ENCODE measurements at regions of chr2 and their contacts with region 1.

Region 1: DNA sequence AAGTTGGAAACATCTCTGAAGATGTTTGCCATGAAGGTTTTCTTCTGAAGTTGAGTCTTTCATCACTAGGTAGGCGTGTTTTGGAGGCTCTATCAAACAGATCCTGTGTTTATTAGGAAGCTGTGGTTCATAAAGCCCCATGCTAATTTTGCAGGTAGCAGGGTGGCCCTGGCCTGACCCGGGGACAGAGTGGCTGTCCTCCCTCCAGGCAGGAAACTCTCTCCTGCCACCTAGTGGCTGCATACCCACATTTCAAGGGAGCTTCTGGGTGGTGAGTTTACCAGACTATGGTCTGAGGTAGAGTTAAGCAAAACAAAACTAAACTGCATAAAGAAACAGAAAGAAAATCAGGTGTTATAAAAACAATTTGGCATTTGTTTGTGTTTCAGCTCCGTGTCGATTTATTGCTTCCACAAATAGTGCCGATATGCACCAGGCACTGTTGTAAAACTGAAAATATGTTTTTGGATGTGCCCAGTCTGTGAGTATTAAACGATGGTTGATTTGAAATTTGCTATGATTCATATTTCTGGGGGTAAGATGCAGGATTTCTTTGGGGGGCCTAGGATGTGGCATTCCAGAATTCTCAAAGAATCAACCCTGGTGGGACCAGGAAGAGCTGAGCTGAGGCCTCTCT is 26.0 kb upstream of the IL37 start:
- DNase-seq: peak; percentile 86
- H3K4me3 Mint-ChIP-seq: no peak overlapping the region
- H3K27ac Mint-ChIP-seq: peak overlapping the region; percentile 44
- H3K4me1 Mint-ChIP-seq: peaks cover 56% of the 10 kb centered on the region
- H3K27me3 Mint-ChIP-seq: no peaks in the 10 kb centered on the region
- CTCF ChIP-seq: peak; percentile 91

Region 2: DNA sequence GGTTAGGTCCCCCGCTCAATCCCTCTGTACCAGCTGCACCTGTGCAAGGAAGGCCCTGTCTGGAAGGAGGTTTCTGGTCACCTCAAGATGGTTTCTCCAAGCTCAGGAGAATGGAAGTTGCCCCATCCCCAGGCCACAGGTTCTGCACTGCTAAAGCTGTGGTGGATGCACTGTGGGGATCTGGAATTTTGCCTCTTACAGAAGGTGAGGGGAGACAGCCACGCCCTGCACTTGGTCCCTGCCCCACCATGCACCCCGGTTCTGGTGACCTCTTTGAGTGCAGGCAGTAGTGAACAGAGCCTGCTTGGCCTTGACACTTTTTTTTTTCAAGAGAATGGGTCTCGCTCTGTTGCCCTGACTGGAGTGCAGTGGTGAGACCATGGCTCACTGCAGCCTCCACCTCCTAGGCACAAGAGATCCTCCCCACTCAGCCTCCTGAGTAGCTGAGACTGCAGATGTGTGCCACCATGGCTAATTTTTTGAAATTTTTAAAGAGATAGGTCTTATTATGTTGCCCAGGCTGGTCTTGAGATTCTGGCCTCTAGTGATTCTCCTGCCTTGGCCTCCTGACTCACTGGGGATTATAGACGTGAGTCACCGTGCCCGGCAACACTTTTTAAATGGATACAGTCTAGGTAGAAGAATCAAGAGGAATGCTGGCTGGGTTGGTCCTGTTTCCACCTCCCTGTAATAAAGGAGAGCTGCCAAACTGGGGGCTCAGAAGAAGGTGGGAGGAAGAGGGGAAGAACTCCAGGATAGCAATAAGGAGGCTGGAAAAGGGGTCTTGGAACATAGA is 170.0 kb before region 1 on chr2:
- CTCF ChIA-PET with region 1: no interaction called
- intact Hi-C with region 1: no loop called
- DNase-seq: peak; percentile 44
- H3K4me3 Mint-ChIP-seq: no peak overlapping the region
- H3K27ac Mint-ChIP-seq: no peak overlapping the region
- H3K4me1 Mint-ChIP-seq: peaks cover 25% of the 10 kb centered on the region
- H3K27me3 Mint-ChIP-seq: peaks cover 8% of the 10 kb centered on the region
- CTCF ChIP-seq: no peak

Region 3: GRCh38 chr2:112749755-112750559 is 135.0 kb before region 1 on chr2:
- CTCF ChIA-PET with region 1: interaction called, 9 read pairs
- intact Hi-C with region 1: loop called (anchors 1 kb)
- DNase-seq: peak; percentile 89
- H3K4me3 Mint-ChIP-seq: no peak overlapping the region
- H3K27ac Mint-ChIP-seq: peak overlapping the region; percentile 88
- H3K4me1 Mint-ChIP-seq: peaks cover 61% of the 10 kb centered on the region
- H3K27me3 Mint-ChIP-seq: no peaks in the 10 kb centered on the region
- CTCF ChIP-seq: peak; percentile 93

Region 4: GRCh38 chr2:112764071-112765044 is 120.6 kb before region 1 on chr2 and contains the start of gene CKAP2L:
- CTCF ChIA-PET with region 1: no interaction called
- intact Hi-C with region 1: loop called (anchors 5 kb)
- DNase-seq: peak; percentile 96
- H3K4me3 Mint-ChIP-seq: peak within 1 kb of the TSS; percentile 98
- H3K27ac Mint-ChIP-seq: peak within 1 kb of the TSS; percentile 24
- H3K4me1 Mint-ChIP-seq: peaks cover 56% of the 10 kb centered on the region
- H3K27me3 Mint-ChIP-seq: no peaks in the 10 kb centered on the region
- CTCF ChIP-seq: no peak
- total RNA-seq, gene CKAP2L: 27.4 and 42.5 TPM in 2 replicates

Region 5: DNA sequence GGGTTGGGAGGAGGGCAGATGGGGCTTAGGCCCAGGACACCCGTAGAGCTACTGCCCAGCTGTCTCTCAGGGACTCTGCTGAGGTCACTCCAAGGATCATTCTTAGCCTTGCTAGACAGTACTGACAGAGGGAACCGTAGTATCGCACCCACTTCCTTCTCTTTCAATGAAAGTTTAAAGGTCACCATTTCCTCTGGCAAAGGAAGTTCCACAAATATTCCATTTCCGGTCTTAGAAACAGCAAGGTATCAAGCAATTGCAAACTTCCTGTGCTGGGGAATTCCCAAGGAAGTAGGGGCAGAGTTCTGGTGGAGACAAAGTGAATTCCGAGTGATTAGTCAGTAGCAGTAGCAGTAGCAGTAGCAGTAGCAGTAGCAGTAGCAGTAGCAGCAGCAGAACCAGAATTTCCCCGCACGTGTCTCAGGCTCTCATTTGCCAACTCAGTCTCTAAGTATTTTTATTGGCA is 73.1 kb before region 1 on chr2:
- CTCF ChIA-PET with region 1: interaction called, 4 read pairs
- intact Hi-C with region 1: loop called (anchors 5 kb)
- DNase-seq: peak; percentile 73
- H3K4me3 Mint-ChIP-seq: peak overlapping the region; percentile 10
- H3K27ac Mint-ChIP-seq: peak overlapping the region; percentile 89
- H3K4me1 Mint-ChIP-seq: peaks cover 70% of the 10 kb centered on the region
- H3K27me3 Mint-ChIP-seq: no peaks in the 10 kb centered on the region
- CTCF ChIP-seq: no peak

Region 6: DNA sequence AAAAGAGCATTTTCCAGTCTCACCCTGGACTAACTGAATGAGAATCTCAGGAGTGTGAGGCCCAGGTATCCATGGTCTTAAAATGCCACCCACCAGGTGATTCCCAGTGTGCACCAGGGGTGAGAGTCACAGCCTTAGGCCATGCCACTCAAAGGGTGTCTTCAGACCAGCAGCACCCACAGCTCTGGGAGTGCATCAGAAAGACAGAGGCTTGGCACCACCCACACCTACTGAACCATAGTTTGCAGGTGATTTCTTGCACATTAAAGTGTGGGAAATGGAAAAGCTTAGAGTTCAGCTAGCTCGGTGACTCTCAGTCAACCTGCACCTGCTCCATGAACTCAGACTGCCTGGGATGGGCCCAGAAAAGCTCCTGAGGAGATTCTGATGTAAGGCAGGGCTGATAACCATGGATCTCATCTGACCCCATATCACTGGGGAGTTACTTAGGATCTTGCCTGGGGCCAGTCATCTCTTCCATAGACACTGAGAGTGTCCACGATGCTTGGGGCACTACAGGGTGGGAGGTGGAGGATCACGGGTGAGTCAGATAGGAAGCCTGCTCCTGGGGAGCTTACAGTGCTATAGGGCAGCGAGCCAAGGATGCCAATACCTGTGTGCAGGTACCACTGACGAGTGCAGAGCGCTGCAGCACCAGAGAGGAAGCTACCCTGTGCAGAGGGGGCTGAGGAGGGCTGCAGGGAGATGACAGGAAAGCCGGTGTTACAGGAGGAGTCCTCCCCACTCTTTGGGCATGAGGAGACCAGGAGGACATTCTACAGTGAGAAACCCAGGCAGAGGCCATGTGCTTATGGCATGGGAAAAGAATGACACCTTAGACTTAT is 30.5 kb after region 1 on chr2:
- CTCF ChIA-PET with region 1: no interaction called
- intact Hi-C with region 1: no loop called
- DNase-seq: no peak
- H3K4me3 Mint-ChIP-seq: no peak overlapping the region
- H3K27ac Mint-ChIP-seq: no peak overlapping the region
- H3K4me1 Mint-ChIP-seq: peaks cover 12% of the 10 kb centered on the region
- H3K27me3 Mint-ChIP-seq: no peaks in the 10 kb centered on the region
- CTCF ChIP-seq: no peak